Heart left ventricle (tissue), 16 donors: ENCODE measurements at regions of chr14 and their contacts with region 1.

Region 1: DNA sequence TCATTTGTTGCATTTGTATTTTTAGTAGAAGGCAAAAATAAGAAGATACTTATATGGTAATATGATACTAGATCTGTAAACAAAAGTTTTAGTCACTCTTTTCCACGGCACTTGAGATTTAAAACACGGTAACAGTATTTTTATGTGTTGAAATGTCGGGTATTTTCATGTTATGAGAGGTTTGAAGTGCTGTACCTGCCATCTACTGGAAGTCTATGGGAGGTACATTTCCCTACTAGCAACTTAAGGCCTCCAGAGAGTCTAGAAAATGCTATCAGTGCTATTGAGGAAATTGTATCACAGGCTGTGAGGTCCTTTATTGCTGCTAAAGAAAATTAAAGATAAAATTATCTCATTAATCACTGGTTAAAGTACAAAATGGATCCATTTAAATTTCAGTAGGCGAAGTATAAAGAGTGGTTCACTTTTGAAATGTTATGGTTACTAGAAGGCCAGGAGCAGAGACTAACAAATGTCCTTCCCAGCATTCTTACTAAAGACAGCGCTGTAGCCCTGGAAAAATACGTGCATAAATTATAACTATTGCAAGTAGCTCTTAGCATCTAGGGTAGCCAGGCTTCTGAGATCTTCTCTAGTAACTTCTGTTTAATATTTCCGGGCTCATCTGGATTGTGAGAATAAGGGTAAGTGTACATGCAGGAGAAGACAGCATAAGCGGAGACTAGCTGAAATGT is 77.6 kb upstream of the PRKD1 start:
- DNase-seq: no peak
- ATAC-seq: peak in 3 of 4 donors; percentile 44 to 77 (median 75)
- H3K4me3 ChIP-seq: no peak overlapping the region
- H3K27ac ChIP-seq: no peak overlapping the region
- H3K4me1 ChIP-seq: peaks cover 0 to 4% (median 0%) of the 10 kb centered on the region in 12 donors
- H3K27me3 ChIP-seq: no peaks in the 10 kb centered on the region
- CTCF ChIP-seq: peak; percentile 45 to 86 (median 79)
- POLR2A ChIP-seq: no peak

Region 2: DNA sequence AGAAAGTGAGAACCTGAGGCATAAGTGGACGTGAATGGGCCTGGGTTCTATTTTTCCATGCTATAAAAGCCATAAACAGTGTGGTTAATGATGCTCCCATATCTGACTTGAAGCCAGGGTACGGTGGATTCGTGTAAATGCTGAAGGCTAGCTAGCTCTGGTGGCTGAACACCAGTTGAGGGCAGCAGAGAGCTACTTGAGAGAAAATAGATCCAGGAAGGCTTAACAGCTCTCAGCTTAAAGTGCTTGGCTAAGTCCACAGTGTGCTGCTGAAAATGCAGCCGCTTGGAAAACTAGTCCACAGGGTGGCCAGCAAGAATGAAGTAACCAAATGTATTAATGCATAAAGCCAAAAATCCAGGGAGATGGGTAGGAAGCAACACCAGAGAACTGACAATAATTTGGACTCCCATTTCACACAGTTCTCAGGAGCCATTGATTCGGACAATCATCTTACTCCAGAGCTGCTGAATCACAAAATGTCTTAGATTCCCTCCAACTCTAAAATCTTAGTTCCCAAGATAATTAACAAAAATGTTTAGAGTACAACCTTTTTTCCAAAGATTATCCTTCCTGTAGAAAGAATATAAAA is 1253.7 kb before region 1 on chr14:
- intact Hi-C with region 1: loop called in 3 of 10 experiments (anchors 10 kb)
- DNase-seq: no peak
- ATAC-seq: no peak
- H3K4me3 ChIP-seq: no peak overlapping the region
- H3K27ac ChIP-seq: no peak overlapping the region
- H3K4me1 ChIP-seq: no peaks in the 10 kb centered on the region
- H3K27me3 ChIP-seq: peaks cover 8 to 55% (median 23%) of the 10 kb centered on the region in 9 donors
- CTCF ChIP-seq: peak in 8 of 12 donors; percentile 9 to 43 (median 33)
- POLR2A ChIP-seq: no peak

Region 3: DNA sequence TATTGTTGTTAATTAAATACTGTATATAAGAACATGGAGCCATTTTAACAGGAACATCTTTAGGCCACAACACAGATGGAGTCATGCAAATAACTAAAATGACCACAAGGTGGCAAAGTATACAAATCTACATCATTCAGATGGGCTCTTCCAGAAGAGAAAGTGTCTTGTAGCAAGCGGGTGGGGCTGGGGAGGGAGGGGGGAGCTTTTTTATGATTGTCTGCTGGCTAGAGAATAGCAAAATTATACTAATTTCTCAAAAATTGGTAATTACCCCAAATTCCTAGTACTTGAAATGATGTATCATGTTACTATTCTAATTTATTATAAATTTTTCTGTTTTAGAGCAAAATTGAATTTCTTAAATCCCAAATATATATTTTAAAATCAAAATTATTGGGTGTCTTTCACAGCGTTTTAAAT is 456.3 kb before region 1 on chr14:
- intact Hi-C with region 1: loop called (anchors 1 to 2 kb)
- DNase-seq: no peak
- ATAC-seq: peak in 3 of 4 donors; percentile 49 to 76 (median 74)
- H3K4me3 ChIP-seq: no peak overlapping the region
- H3K27ac ChIP-seq: no peak overlapping the region
- H3K4me1 ChIP-seq: no peaks in the 10 kb centered on the region
- H3K27me3 ChIP-seq: peaks cover 0 to 8% (median 0%) of the 10 kb centered on the region in 9 donors
- CTCF ChIP-seq: peak; percentile 49 to 73 (median 64)
- POLR2A ChIP-seq: no peak

Region 4: DNA sequence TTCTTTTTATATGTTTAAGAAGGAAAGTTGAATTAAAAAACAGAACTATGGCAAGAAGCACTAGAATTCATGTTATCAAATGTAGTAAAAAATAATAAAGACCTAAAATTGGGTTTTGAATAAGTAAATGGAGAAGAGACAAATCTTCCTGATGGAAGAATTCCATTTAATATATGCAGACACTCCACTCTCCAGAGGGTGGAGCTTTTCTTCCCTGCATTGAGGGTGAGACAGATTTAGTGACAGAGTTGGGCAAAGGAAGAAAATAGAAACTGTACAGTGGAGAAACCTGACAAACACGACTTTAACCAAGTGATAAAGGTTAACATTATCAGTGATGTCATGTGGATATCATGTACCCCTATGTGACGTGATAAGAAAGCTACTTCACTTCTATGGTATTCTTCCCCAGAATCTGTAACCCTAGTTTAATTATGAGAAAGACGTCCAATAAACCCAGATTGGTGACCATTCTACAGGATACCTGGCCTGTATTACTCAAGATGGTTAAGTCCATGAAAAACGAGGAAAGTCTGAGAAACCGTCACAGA is 295.2 kb before region 1 on chr14:
- intact Hi-C with region 1: loop called in 4 of 10 experiments (anchors 2 to 10 kb)
- DNase-seq: no peak
- ATAC-seq: peak in 1 of 4 donors; percentile 45
- H3K4me3 ChIP-seq: no peak overlapping the region
- H3K27ac ChIP-seq: no peak overlapping the region
- H3K4me1 ChIP-seq: no peaks in the 10 kb centered on the region
- H3K27me3 ChIP-seq: no peaks in the 10 kb centered on the region
- CTCF ChIP-seq: peak; percentile 7 to 59 (median 37)
- POLR2A ChIP-seq: no peak

Region 5: GRCh38 chr14:29724991-29725390 is 280.3 kb before region 1 on chr14:
- intact Hi-C with region 1: loop called in 1 of 10 experiments (anchors 10 kb)
- DNase-seq: no peak
- ATAC-seq: peak in 1 of 4 donors; percentile 29
- H3K4me3 ChIP-seq: no peak overlapping the region
- H3K27ac ChIP-seq: no peak overlapping the region
- H3K4me1 ChIP-seq: peaks cover 0 to 17% (median 10%) of the 10 kb centered on the region in 12 donors
- H3K27me3 ChIP-seq: no peaks in the 10 kb centered on the region
- CTCF ChIP-seq: no peak
- POLR2A ChIP-seq: no peak

Region 6: DNA sequence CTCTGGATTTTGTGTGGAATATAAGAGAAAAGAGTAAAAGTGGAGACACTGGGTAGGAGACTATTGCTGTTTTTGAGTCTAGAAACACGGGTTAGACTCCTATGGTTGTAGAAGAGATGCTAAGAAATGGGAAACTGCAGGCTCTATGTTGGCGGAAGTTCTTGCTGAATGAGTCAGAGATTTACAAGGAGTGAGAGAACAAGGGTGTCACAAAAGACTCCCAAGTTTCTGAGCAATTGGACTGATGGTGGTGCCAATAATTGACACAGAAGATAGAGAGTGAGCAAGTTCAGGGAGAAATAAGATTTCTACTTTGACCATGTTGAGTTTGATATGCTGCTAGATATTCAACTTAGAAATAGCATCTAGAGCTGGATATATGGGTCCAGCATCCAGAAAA is 75.0 kb before region 1 on chr14:
- intact Hi-C with region 1: no loop called
- DNase-seq: no peak
- ATAC-seq: no peak
- H3K4me3 ChIP-seq: no peak overlapping the region
- H3K27ac ChIP-seq: no peak overlapping the region
- H3K4me1 ChIP-seq: peaks cover 0 to 22% (median 13%) of the 10 kb centered on the region in 12 donors
- H3K27me3 ChIP-seq: peaks cover 0 to 20% (median 0%) of the 10 kb centered on the region in 9 donors
- CTCF ChIP-seq: no peak
- POLR2A ChIP-seq: no peak

Region 7: GRCh38 chr14:30214461-30215090 is 209.3 kb after region 1 on chr14:
- intact Hi-C with region 1: loop called in 2 of 10 experiments (anchors 10 kb)
- DNase-seq: no peak
- ATAC-seq: peak in 2 of 4 donors; percentile 33 to 41
- H3K4me3 ChIP-seq: no peak overlapping the region
- H3K27ac ChIP-seq: no peak overlapping the region
- H3K4me1 ChIP-seq: no peaks in the 10 kb centered on the region
- H3K27me3 ChIP-seq: peaks cover 0 to 6% (median 0%) of the 10 kb centered on the region in 9 donors
- CTCF ChIP-seq: peak in 11 of 12 donors; percentile 36 to 67 (median 55)
- POLR2A ChIP-seq: no peak